Common myeloid progenitor, CD34-positive (primary cell): ENCODE measurements at regions of chr11 and their contacts with region 1.

Region 1: GRCh38 chr11:47152953-47153950 is 23.4 kb downstream of the ARFGAP2 start:
- DNase-seq: peak; percentile 64 to 76 (median 69)
- H3K4me3 ChIP-seq: no peak overlapping the region
- H3K27ac ChIP-seq: no peak overlapping the region
- H3K4me1 ChIP-seq: peaks cover 6 to 46% (median 34%) of the 10 kb centered on the region in 4 experiments
- H3K27me3 ChIP-seq: no peaks in the 10 kb centered on the region

Region 2: DNA sequence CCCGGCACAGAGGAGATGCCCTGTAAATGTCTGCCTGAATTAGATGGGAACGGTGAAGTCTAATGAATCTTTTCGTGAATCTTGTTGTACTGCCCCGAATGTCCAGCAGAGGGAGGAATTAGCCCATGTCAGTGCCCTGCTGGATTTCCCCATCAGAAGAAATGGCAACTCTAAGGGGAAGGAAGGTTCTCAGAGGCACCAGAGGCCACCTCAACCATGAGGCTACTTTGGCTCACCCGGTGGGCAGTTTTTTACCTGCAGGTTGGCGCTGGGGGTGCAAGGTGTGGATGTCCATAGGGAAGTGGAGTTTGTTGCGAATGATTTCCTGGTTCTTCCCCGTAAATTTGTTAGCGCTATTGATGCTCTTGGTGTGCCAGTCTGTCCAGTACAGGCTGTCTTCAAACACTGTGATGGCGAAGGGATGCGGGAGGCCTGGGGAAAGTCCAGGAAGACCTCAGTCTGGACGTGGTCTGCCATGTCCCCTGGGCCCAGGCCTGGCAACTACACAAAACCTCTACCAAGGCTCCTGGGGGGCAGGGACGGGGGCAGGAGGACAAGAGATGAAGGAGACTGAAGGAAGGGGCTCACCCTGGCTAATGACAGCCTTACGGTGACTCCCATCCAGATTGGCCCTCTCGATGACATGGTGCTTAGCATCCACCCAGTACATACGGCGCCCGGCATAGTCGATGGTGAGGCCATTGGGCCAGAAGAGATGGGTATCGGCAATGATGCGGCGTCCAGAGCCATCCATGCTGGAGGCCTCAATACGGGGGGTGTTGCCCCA is 263.4 kb before region 1 on chr11:
- CTCF ChIA-PET with region 1: interaction called, 106 read pairs
- POLR2A ChIA-PET with region 1: no interaction called
- DNase-seq: peak; percentile 78 to 88 (median 79)
- H3K4me3 ChIP-seq: no peak overlapping the region
- H3K27ac ChIP-seq: no peak overlapping the region
- H3K4me1 ChIP-seq: no peaks in the 10 kb centered on the region
- H3K27me3 ChIP-seq: no peaks in the 10 kb centered on the region

Region 3: GRCh38 chr11:46906609-46907041 is 246.6 kb before region 1 on chr11:
- CTCF ChIA-PET with region 1: interaction called, 11 read pairs
- POLR2A ChIA-PET with region 1: interaction called, 3 read pairs
- DNase-seq: peak in 1 of 3 donors; percentile 19
- H3K4me3 ChIP-seq: peak overlapping the region in 1 of 7 experiments; percentile 23
- H3K27ac ChIP-seq: no peak overlapping the region
- H3K4me1 ChIP-seq: peaks cover 0 to 10% (median 5%) of the 10 kb centered on the region in 4 experiments
- H3K27me3 ChIP-seq: no peaks in the 10 kb centered on the region

Region 4: DNA sequence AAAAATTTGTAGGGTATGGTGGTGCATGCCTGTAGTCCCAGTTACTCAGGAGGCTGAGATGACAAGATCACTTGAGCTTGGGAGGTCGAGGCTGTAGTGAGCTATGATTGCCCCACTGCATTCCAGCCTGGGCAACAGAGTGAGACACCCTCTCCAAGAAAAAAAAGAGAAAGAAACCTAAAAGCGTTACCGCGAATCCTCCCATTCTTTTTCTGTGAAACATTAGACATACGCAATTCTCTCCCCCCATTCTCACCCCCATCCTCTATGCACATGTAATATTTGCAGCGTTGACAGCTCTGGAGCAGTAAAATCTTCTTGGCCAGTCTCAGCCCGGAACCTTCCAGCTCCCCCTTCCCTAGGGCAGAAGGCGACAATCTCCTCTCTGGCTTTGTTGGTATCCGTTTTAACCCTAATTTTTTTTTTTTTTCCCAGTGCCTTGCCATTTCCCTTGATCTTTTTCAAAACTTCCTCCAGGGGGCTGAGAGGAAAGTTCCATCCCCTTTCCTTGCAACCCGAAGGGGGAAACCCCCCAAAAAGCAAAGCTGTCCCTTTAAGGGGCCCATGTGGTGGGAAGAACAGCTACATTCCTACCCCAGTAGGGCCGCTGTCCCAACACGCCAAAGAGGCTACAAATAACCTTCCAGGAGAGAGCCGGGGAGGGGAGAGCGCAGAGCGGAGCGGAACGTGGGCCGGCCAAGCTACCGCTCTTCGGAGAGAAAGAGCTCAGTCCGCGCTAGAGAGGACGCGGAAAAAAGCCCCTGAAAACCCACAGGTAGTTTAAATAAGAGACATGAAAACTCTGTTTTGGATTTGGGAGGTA is 236.8 kb before region 1 on chr11:
- CTCF ChIA-PET with region 1: interaction called, 27 read pairs
- POLR2A ChIA-PET with region 1: no interaction called
- DNase-seq: peak in 2 of 3 donors; percentile 45 to 59
- H3K4me3 ChIP-seq: peak overlapping the region; percentile 37 to 87 (median 65)
- H3K27ac ChIP-seq: no peak overlapping the region
- H3K4me1 ChIP-seq: peaks cover 14 to 41% (median 34%) of the 10 kb centered on the region in 4 experiments
- H3K27me3 ChIP-seq: peaks cover 8 to 54% (median 29%) of the 10 kb centered on the region in 5 experiments

Region 5: DNA sequence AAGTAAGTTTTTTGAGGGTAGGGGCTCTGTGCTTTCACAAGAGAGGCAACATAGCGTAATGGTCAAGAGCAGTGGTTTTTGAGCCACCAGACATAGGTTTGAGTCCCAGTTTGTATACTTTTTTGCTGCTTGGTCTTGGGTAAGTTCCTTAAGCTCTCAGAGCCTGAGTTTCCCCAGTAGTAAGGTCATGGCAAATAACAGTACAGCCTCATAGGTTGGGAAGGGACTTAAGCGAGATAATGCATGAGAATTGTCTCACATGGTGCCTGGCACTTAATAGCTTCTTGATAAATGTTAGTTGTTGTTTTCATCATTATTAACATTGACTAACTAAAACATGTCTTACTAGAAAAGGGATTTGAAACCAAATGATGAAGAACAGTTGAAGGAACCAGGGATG is 59.7 kb before region 1 on chr11:
- CTCF ChIA-PET with region 1: no interaction called
- POLR2A ChIA-PET with region 1: no interaction called
- DNase-seq: no peak
- H3K4me3 ChIP-seq: no peak overlapping the region
- H3K27ac ChIP-seq: no peak overlapping the region
- H3K4me1 ChIP-seq: no peaks in the 10 kb centered on the region
- H3K27me3 ChIP-seq: no peaks in the 10 kb centered on the region